ENCODE measurements at regions of chr12 and their contacts with region 1.

Region 1: GRCh38 chr12:122935318-122935717 is 30.9 kb downstream of the ABCB9 start:
- DNase-seq: no peak
- ATAC-seq: no peak
- H3K4me3 Mint-ChIP-seq: no peak overlapping the region
- H3K27ac Mint-ChIP-seq: no peak overlapping the region
- H3K4me1 Mint-ChIP-seq: peaks cover 24% of the 10 kb centered on the region
- H3K27me3 Mint-ChIP-seq: no peaks in the 10 kb centered on the region
- CTCF ChIP-seq: no peak

Region 2: DNA sequence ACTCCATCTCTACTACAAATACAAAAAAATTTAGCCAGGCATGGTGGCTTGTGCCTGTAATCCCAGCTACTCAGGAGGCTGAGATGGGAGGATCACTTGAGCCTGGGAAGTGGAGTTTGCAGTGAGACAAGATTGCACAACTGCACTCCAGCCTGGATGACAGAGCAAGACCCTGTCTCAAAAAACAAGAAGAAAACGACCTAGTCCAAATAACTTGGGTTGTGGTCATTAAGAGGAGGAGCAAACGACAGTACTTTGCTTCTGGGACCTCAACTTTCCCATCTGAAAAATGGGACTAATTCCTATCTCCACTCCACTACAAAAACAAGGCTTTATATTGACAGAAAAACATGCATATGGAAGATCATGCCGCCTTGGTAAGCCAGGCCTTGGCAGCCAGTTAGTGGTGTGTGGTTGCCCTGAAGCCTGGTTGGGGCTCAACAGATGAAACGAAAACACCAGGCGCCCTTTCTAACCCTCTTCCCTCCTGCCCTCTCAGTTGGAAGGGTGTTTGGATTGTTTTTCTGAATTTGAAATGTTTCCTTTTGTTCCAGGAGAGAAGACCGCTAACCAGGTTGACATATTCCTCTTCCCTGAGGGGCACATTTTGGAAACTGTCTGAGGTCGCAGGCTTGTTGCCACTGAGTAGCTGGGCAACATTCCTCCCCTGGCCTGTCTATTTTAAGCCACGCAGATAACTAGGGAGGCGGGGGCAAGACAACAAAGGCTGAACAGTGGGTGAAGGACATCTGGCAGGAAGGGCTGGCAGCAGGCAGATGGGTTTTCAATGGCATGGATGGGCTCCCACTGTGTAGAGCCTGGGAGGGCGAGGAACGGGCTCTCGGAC is 25.7 kb before region 1 on chr12:
- CTCF ChIA-PET with region 1: no interaction called
- POLR2A ChIA-PET with region 1: interaction called, 10 read pairs
- intact Hi-C with region 1: no loop called
- DNase-seq: no peak
- ATAC-seq: no peak
- H3K4me3 Mint-ChIP-seq: no peak overlapping the region
- H3K27ac Mint-ChIP-seq: no peak overlapping the region
- H3K4me1 Mint-ChIP-seq: no peaks in the 10 kb centered on the region
- H3K27me3 Mint-ChIP-seq: no peaks in the 10 kb centered on the region
- CTCF ChIP-seq: no peak